ENCODE measurements at regions of chr2 and their contacts with region 1.

Region 1: GRCh38 chr2:193240752-193241151 is 1046.0 kb upstream of the TMEFF2 start:
- DNase-seq: no peak
- H3K4me3 ChIP-seq: no peak overlapping the region
- H3K27ac ChIP-seq: no peak overlapping the region
- H3K4me1 ChIP-seq: no peaks in the 10 kb centered on the region
- H3K27me3 ChIP-seq: no peaks in the 10 kb centered on the region
- CTCF ChIP-seq: peak in 2 of 3 experiments; percentile 14 to 39; a peak in 2 of 4 replicates
- EP300 ChIP-seq: no peak
- POLR2A ChIP-seq: no peak
- RAD21 ChIP-seq: peak; percentile 36 to 49

Region 2: GRCh38 chr2:193124815-193125214 is 115.9 kb before region 1 on chr2:
- CTCF ChIA-PET with region 1: no interaction called
- POLR2A ChIA-PET with region 1: no interaction called
- DNase-seq: no peak
- H3K4me3 ChIP-seq: no peak overlapping the region
- H3K27ac ChIP-seq: no peak overlapping the region
- H3K4me1 ChIP-seq: no peaks in the 10 kb centered on the region
- H3K27me3 ChIP-seq: no peaks in the 10 kb centered on the region
- CTCF ChIP-seq: no peak
- EP300 ChIP-seq: no peak
- POLR2A ChIP-seq: no peak
- RAD21 ChIP-seq: no peak

Region 3: GRCh38 chr2:193228276-193228675 is 12.5 kb before region 1 on chr2:
- CTCF ChIA-PET with region 1: interaction called, 17 read pairs
- POLR2A ChIA-PET with region 1: no interaction called
- DNase-seq: no peak
- H3K4me3 ChIP-seq: no peak overlapping the region
- H3K27ac ChIP-seq: no peak overlapping the region
- H3K4me1 ChIP-seq: no peaks in the 10 kb centered on the region
- H3K27me3 ChIP-seq: no peaks in the 10 kb centered on the region
- CTCF ChIP-seq: peak in 2 of 3 experiments; percentile 36 to 57; a peak in 3 of 4 replicates
- EP300 ChIP-seq: no peak
- POLR2A ChIP-seq: no peak
- RAD21 ChIP-seq: peak; percentile 38 to 48; a peak in 3 of 4 replicates

Region 4: DNA sequence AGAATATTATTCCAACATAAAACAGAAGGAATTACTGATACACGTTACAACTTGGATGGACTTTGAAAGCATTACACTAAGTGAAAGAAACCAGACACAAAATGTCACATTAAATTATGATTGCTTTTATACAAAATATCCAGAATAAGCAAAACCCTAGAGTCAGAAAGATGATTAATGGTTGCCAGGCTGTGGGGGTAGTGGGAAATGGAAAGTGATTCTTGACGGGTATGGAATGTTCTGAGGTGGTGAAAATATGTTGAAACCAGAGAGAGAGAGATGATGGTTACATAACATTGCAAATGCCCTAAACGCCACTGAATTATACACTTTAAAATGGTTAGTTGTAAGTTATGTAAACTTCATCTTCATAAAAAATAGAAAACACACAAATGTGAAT is 11.2 kb after region 1 on chr2:
- CTCF ChIA-PET with region 1: interaction called, 11 read pairs
- POLR2A ChIA-PET with region 1: no interaction called
- DNase-seq: no peak
- H3K4me3 ChIP-seq: no peak overlapping the region
- H3K27ac ChIP-seq: no peak overlapping the region
- H3K4me1 ChIP-seq: no peaks in the 10 kb centered on the region
- H3K27me3 ChIP-seq: no peaks in the 10 kb centered on the region
- CTCF ChIP-seq: no peak
- EP300 ChIP-seq: no peak
- POLR2A ChIP-seq: no peak
- RAD21 ChIP-seq: no peak

Measured in H1 (cell line).